PC-9 (cell line): ENCODE measurements at regions of chr9 and their contacts with region 1.

Region 1: GRCh38 chr9:34332076-34332964 is 3.0 kb downstream of the NUDT2 start:
- DNase-seq: no peak
- H3K4me3 ChIP-seq: no peak overlapping the region
- H3K27ac ChIP-seq: no peak overlapping the region
- H3K4me1 ChIP-seq: peaks cover 4% of the 10 kb centered on the region; the same call in 1 of the 2 replicates
- H3K27me3 ChIP-seq: no peaks in the 10 kb centered on the region
- CTCF ChIP-seq: peak; percentile 50

Region 2: DNA sequence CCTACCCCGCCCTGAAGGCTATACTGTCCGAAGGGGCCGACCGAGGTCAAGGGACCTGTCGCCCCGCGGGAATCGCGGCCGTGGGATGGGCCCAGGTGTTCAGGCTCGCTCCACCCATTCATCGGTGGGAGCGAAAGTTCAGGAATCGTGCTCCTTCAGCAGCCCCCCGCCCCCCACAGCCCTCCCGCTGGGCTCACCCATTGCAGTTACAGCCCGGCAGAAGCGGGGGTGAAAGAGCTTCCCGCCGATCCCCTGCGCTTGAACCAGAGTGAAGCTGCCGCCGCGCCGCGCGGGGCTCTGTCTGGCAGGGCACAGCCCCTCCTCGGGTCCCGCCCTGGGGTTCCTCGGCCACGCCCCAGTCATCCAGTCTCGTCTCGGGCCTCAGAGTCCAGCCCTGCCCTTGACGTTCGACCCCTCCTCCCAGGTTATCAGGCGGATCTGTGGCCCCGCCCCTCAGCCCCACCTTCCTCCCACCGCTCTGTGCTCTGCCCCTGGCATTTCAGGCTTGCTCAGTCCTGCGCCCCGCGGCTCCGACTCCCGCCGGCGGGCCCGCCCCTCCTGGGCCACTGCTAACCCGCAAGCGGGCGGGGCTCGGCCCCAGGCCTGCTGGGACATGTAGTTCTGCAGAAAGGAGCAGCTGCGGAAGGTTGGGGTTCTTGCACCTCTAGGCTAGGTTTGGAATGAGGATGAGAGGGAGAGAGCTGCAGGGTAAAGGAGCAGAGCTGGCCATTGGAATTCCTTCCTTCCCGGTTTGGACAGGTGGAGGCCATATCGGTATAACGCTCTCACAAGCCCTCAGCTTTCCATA is 44.5 kb after region 1 on chr9 and contains the start of gene MYORG:
- CTCF ChIA-PET with region 1: interaction called, 7 read pairs
- POLR2A ChIA-PET with region 1: interaction called, 3 read pairs
- intact Hi-C with region 1: loop called (anchors 2 kb)
- DNase-seq: peak; percentile 87 to 96
- H3K4me3 ChIP-seq: peak within 1 kb of the TSS; percentile 62
- H3K27ac ChIP-seq: no peak within 1 kb of the TSS
- H3K4me1 ChIP-seq: peaks cover 7% of the 10 kb centered on the region; the same call in 1 of the 2 replicates
- H3K27me3 ChIP-seq: no peaks in the 10 kb centered on the region
- CTCF ChIP-seq: no peak
- total RNA-seq, gene MYORG: 3.0 and 3.1 TPM in 2 replicates

Region 3: GRCh38 chr9:34603610-34604231 is 271.4 kb after region 1 on chr9:
- CTCF ChIA-PET with region 1: no interaction called
- POLR2A ChIA-PET with region 1: no interaction called
- intact Hi-C with region 1: loop called (anchors 2 kb)
- DNase-seq: peak; percentile 37 to 63
- H3K4me3 ChIP-seq: no peak overlapping the region
- H3K27ac ChIP-seq: no peak overlapping the region
- H3K4me1 ChIP-seq: no peaks in the 10 kb centered on the region
- H3K27me3 ChIP-seq: no peaks in the 10 kb centered on the region
- CTCF ChIP-seq: peak; percentile 90

Region 4: DNA sequence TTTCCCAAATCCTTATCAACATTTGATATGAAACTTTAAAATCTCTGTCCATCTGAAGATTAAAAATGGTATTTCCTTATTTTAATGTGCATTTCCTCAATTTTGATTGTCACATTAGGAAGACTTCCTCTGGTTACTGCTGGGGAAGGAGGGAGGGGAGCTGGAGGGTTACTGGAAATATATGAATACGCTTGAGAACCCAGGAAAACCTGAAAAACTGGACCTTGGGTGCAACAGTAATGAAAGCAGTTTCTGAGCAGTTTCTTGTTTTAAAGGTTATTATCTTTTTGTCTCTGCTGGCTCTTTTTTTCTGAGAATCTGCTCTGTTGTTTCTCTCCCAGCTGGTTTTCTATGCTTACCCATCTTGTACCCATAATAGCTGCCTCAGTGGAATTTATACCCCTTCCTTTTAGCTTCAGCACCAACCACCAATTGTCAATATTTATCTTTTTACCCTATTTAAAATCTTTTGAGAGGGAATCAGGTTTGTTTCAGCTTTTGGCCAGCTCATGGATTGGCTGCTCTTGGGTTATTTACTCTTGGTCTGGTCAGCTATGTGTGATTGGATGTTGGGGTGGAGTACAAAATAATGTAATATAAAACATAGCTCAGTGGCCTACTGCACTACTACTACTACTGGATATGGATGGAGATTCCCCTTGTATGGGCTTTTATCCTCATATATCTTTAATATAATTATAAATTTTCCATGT is 896.9 kb after region 1 on chr9:
- CTCF ChIA-PET with region 1: no interaction called
- POLR2A ChIA-PET with region 1: no interaction called
- intact Hi-C with region 1: no loop called
- DNase-seq: no peak
- H3K4me3 ChIP-seq: no peak overlapping the region
- H3K27ac ChIP-seq: no peak overlapping the region
- H3K4me1 ChIP-seq: no peaks in the 10 kb centered on the region
- H3K27me3 ChIP-seq: no peaks in the 10 kb centered on the region
- CTCF ChIP-seq: no peak